Psoas muscle (tissue), 8 donors: ENCODE measurements at regions of chr10 and their contacts with region 1.

Region 1: DNA sequence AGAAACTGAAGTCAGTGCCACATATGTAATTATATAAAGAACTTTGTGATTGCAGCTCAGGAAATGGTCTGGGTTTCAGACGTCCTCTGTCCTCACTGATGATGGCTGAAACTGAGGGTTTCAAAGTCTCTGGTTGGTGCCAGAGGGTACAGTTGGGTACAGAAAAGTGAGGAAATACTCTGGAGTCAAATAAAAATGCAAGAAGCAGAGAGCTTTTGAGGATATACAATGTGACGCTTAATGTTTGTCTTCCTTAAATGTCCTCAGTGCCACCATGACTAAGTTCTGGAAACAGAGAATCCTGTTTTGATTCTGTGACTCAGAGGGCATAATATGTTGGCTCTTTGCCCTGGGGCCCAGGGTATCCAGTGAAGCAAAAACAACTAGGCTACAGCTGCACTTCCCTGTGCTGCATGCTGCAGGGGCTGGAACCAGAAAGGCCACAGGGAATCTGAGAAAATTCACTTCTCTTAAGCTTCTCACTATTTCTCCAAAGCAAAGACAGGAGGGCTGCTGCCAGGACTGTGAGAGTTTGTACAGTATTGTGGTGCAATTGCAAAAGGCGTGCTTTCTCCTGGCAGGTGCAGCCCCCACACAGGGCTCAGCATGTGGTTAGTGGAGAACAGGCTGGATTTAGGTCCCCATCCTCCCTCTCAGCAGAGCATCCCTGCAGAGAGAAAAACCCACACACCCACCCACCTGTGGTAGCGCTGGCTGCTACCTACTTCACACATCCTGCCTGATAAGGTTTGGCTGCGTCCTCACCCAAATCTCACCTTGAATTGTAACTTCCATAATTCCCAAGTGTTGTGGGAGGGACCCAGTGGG is 169.5 kb upstream of the SVIL start:
- DNase-seq: peak; percentile 51 to 75
- ATAC-seq: peak; percentile 71 to 89 (median 81)
- H3K4me3 ChIP-seq: peak overlapping the region; percentile 11
- H3K27ac ChIP-seq: peak overlapping the region; percentile 98
- H3K4me1 ChIP-seq: peaks cover 52% of the 10 kb centered on the region
- H3K27me3 ChIP-seq: no peaks in the 10 kb centered on the region
- CTCF ChIP-seq: no peak

Region 2: DNA sequence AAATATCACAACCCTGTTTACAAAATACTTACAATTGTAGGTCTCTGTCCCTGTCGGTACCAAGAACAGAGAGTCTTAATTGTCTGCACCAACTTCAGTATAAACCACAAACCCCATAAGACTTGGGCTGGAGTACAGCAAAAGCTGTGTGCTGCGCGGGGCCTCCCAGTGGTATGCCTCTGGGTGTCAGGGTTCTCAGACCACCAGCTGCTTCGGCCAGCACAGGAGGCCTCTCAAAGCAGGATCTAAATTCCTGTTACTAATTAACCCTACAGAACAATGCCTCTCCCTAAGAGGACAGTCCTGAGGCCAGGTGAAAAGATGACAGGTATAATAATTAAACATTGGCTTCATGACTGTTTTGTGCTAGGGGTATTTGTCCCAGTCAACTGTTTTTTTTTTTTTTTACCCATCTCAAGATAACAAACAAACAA is 168.5 kb before region 1 on chr10:
- intact Hi-C with region 1: loop called in 1 of 2 experiments (anchors 2 kb)
- DNase-seq: peak in 1 of 2 donors; percentile 64
- ATAC-seq: peak in 3 of 4 donors; percentile 22 to 44 (median 37)
- H3K4me3 ChIP-seq: peak overlapping the region; percentile 77
- H3K27ac ChIP-seq: peak overlapping the region; percentile 94
- H3K4me1 ChIP-seq: peaks cover 19% of the 10 kb centered on the region
- H3K27me3 ChIP-seq: no peaks in the 10 kb centered on the region
- CTCF ChIP-seq: no peak

Region 3: GRCh38 chr10:29784175-29784773 is 20.0 kb before region 1 on chr10:
- intact Hi-C with region 1: loop called in 1 of 2 experiments (anchors 2 kb)
- DNase-seq: peak; percentile 63 to 79
- ATAC-seq: peak; percentile 94 to 98 (median 98)
- H3K4me3 ChIP-seq: no peak overlapping the region
- H3K27ac ChIP-seq: peak overlapping the region; percentile 89
- H3K4me1 ChIP-seq: peaks cover 16% of the 10 kb centered on the region
- H3K27me3 ChIP-seq: no peaks in the 10 kb centered on the region
- CTCF ChIP-seq: no peak

Region 4: DNA sequence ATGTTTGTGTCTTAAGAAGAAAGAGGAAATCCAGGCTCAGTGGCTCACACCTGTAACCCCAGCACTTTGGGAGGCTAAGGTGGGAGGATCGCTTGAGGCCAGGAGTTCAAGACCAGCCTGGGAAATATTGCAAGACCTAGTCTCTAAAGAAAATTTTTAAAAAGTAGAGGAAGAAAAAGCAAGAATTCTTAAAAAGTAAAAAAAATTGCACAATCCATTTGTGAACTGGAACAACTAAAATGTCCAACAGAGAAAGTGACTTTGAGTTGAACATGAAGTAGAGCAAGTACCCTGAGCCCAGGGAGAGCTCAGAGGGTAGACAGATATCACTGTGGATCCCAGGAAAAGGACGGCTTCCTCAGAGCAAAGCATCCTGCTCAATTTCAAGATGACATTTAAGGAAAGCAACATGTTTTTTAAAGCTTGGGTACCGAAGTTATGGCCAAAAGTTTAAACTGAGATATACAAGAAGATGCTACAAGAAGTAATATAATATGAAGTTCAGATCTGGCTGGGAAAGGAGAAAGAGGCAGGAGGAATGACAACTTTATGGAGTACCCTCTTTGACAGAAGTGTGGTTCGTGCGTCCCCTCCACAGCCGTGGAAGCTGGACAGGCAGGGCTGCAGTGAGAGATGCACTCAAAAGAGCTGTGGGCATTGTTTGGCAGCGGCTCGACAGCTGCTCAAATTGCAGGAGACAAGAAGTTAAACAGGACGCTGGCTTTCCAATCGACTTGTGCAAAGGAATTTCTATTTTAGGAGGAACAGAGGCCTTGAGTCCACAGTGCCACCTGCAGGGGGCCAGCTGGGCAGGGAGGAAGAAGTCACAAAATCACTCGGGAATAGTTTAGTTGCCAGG is 53.8 kb after region 1 on chr10:
- intact Hi-C with region 1: loop called in 1 of 2 experiments (anchors 2 kb)
- DNase-seq: peak; percentile 70 to 86
- ATAC-seq: peak; percentile 80 to 87 (median 83)
- H3K4me3 ChIP-seq: peak overlapping the region; percentile 22
- H3K27ac ChIP-seq: peak overlapping the region; percentile 84
- H3K4me1 ChIP-seq: peaks cover 50% of the 10 kb centered on the region
- H3K27me3 ChIP-seq: no peaks in the 10 kb centered on the region
- CTCF ChIP-seq: peak; percentile 68

Region 5: DNA sequence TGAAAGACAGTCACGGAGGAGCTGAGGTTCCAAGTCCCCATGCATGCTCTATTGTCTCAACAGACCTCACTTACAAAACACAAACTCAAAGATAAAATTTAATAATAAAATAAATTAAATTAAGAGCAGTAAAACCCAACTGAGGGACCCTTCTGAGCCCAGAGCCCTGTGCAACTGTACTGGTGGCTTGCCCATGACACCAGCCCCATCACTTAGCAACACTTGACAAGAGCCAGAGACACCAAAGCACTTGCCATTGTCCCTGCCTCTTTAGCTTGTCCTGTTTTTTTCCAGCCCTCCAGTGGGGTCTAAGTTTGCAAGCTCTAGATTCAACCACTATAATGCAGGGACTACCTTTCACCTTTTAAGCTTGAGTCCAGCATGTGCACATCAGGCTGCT is 137.2 kb after region 1 on chr10:
- intact Hi-C with region 1: loop called (anchors 5 to 10 kb)
- DNase-seq: no peak
- ATAC-seq: no peak
- H3K4me3 ChIP-seq: no peak overlapping the region
- H3K27ac ChIP-seq: no peak overlapping the region
- H3K4me1 ChIP-seq: peaks cover 10% of the 10 kb centered on the region
- H3K27me3 ChIP-seq: no peaks in the 10 kb centered on the region
- CTCF ChIP-seq: no peak

Region 6: DNA sequence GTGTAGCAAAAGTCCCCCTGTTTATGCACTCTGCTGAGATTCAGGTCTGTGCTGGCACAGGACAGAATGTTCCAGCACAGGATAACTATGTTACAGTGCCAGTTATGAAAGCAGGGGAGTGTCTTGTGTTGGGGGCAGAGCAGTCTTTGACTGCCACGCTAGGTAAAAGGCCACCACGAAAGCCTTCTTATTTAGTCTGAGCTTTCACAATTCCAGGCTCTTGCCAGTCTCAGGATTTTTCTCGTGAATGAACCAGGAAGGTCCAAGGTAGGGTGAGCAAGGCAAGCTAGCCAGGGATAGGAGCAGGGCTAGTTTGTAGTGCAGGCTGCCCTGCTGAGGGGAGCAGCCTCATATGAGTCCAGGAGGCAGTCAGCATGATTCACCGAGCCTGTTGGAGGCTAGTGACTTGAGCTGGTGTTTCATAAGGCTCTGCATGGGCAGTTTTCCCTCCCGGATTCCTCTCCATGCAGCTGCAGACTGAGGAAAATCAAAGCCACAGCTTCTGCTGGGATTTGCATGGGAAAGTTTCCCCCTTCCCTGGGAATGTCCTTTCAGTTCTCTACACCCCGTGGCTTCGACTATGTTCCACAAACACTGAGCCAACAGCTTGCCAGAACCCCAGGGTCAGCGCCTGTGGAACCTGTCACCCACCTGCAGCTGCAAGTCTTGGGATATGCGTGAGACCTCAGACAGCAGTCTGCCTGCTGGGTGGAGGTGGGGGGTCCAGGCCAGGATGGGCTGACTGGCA is 142.9 kb after region 1 on chr10:
- intact Hi-C with region 1: loop called (anchors 5 to 10 kb)
- DNase-seq: peak; percentile 70 to 84
- ATAC-seq: peak; percentile 87 to 92 (median 90)
- H3K4me3 ChIP-seq: peak overlapping the region; percentile 43
- H3K27ac ChIP-seq: peak overlapping the region; percentile 96
- H3K4me1 ChIP-seq: peaks cover 49% of the 10 kb centered on the region
- H3K27me3 ChIP-seq: no peaks in the 10 kb centered on the region
- CTCF ChIP-seq: no peak

Region 7: DNA sequence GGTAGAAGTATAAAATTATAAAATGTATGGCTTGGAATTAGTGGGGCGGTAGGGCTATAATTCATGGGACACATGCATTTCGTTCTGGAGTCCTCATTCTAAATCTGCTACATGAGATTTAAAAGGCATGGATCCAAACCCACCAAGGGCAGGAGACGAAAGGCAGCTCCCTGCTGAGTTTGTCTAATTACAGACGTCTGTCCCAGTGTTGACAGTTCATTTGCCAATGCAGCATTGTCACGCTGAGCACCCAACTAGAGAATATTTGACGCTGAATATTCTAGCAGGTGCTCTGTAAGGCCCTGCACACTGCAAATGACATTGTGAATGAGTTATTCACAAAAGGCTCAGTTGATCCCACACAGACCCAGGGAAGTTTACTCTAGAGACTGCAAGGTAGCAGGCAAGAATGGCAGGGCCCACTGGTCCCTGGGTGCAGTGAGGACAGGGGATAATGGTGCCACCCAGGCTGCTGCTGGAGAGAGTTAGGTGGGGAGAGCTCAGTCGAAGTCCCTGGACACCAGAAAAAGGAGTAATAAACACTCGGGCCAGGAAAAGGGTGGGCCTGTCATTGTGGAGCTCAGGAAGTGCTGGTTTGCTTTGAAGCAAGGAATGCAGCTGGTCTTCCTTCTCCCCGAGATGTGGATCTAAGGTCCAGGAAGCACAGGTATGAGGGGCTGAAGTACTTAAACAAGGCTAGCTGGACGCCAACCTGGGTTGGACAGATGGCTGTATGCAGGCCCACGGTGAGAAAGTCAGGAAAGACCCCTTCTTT is 330.1 kb after region 1 on chr10:
- intact Hi-C with region 1: no loop called
- DNase-seq: no peak
- ATAC-seq: no peak
- H3K4me3 ChIP-seq: no peak overlapping the region
- H3K27ac ChIP-seq: no peak overlapping the region
- H3K4me1 ChIP-seq: no peaks in the 10 kb centered on the region
- H3K27me3 ChIP-seq: no peaks in the 10 kb centered on the region
- CTCF ChIP-seq: no peak